Left ventricle myocardium inferior (tissue), 1 donor: ENCODE measurements at regions of chr19 and their contacts with region 1.

Region 1: DNA sequence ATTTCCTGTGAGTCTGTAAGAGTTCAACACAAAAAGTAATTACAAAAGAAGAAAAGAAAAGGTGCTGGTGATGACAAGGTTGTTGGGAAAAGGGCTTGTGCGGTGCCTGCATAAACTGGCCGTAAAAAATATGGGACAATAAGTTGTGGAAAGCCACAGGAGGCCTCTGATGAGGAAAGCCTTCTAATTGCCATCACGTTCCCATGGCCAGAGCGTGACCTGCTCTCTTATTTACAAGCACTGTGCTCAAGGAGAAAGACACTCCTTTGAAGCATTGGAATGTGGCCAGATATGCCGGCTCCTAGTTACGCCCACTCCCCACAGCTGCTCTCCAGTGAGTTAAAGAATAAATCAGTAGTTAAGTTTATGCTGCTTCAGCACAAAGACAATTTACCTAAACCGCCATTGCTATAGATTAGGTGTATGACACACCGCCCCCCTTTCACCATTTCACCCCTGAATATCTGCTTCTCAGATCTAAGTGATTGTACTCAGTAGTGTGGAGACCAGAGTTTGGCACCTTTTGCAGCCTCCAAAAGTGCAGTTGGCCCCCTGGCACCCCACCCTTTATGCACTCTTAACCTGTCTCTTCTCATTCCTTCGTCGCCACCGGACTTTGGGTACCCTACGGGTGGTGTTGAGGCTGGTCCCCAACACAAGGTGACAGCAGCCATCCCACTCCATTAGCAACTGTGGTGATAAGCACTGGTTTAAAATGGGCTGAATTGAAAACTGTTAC is 8.1 kb upstream of the PGLYRP1 start:
- DNase-seq: no peak
- H3K4me3 ChIP-seq: no peak overlapping the region
- H3K27ac ChIP-seq: no peak overlapping the region
- H3K4me1 ChIP-seq: no peaks in the 10 kb centered on the region
- H3K27me3 ChIP-seq: peaks cover 88% of the 10 kb centered on the region
- CTCF ChIP-seq: no peak

Region 2: GRCh38 chr19:46256855-46257254 is 225.9 kb after region 1 on chr19:
- intact Hi-C with region 1: loop called (anchors 5 kb)
- DNase-seq: no peak
- H3K4me3 ChIP-seq: no peak overlapping the region
- H3K27ac ChIP-seq: no peak overlapping the region
- H3K4me1 ChIP-seq: no peaks in the 10 kb centered on the region
- H3K27me3 ChIP-seq: peaks cover 59% of the 10 kb centered on the region
- CTCF ChIP-seq: no peak

Region 3: GRCh38 chr19:46378268-46378667 is 347.3 kb after region 1 on chr19:
- intact Hi-C with region 1: no loop called
- DNase-seq: no peak
- H3K4me3 ChIP-seq: no peak overlapping the region
- H3K27ac ChIP-seq: peak overlapping the region; percentile 77
- H3K4me1 ChIP-seq: peaks cover 59% of the 10 kb centered on the region
- H3K27me3 ChIP-seq: no peaks in the 10 kb centered on the region
- CTCF ChIP-seq: no peak